Heart right ventricle (tissue), 16 donors: ENCODE measurements at regions of chr10 and their contacts with region 1.

Region 1: DNA sequence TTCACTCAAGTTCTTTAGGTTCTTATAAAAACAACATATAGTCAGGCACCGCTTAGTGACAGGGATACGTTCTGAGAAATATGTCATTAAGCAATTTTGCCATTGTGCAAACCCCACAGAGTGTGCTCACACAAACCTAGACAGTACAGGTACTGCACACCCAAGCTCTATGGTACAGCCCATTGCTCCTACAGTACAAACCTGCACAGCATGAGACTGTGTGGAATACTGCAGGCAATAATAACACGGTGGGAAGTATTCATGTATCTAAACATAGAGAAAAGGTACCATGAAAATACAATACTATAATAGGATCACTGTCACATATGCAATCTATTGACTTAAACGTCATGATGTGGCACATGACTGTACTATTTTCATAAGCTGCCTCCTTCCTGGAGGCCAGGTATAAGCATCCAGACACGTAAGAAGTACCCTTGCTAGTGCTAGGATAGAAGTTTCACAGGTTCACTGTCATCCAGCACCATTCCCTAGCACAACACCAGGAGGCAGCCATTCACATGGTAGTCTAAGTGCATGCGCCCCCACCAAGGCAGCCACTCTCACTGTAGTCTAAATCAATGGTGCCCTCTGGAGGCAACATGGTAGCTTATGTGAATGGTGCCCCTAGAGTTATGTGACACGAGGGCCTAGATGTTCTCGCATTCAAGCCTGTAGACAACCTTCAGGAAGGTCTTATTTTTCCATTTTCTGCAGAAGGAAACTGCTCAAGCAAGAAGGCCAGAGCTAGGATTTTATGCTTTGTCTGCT is 98.5 kb downstream of the ARHGAP22 start:
- DNase-seq: no peak
- ATAC-seq: peak in 1 of 8 donors; percentile 27
- H3K4me3 ChIP-seq: no peak overlapping the region
- H3K27ac ChIP-seq: no peak overlapping the region
- H3K4me1 ChIP-seq: peaks cover 7 to 39% (median 19%) of the 10 kb centered on the region in 9 donors
- H3K27me3 ChIP-seq: no peaks in the 10 kb centered on the region
- CTCF ChIP-seq: peak in 5 of 9 donors; percentile 20 to 37 (median 33)

Region 2: DNA sequence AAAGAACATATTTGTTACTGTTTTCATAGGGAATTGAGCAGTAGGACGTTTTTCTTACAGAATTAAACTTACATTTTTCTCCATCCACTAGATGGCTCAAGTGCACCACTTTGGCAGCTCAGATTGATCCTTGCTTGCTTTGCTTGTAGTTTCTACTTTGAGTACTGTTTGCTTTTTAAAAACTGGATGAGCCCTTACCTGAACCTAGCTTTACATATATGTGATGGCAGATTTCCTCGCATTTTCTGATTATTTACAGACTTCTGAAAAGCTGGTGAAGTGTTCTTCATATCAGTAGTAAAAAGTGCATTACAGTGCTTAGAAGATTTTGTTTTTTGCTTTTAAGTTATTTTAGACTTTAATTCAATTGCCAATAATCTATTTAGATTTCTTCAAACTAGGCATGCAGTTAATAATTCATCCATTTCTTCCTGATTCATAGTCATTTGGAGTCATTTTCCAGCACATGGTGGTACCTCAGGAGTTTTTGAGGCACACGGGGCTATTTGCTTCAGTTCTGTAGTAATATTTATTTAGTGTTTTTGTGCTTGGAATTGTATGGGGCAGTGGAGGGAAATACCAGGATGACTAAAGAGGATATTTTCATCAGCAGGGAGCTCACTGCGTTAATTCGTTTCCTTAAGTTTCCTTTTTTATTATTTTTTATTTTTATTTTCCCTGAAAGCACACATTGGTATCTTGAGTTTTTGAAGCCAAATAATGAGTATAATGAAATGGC is 142.5 kb before region 1 on chr10:
- intact Hi-C with region 1: loop called in 7 of 10 experiments (anchors 2 to 10 kb)
- DNase-seq: peak in 1 of 2 donors; percentile 52
- ATAC-seq: peak in 7 of 8 donors; percentile 51 to 88 (median 73)
- H3K4me3 ChIP-seq: no peak overlapping the region
- H3K27ac ChIP-seq: peak overlapping the region in 6 of 10 donors; percentile 3 to 71 (median 42)
- H3K4me1 ChIP-seq: peaks cover 0 to 60% (median 43%) of the 10 kb centered on the region in 9 donors
- H3K27me3 ChIP-seq: no peaks in the 10 kb centered on the region
- CTCF ChIP-seq: peak; percentile 50 to 85 (median 74)

Region 3: DNA sequence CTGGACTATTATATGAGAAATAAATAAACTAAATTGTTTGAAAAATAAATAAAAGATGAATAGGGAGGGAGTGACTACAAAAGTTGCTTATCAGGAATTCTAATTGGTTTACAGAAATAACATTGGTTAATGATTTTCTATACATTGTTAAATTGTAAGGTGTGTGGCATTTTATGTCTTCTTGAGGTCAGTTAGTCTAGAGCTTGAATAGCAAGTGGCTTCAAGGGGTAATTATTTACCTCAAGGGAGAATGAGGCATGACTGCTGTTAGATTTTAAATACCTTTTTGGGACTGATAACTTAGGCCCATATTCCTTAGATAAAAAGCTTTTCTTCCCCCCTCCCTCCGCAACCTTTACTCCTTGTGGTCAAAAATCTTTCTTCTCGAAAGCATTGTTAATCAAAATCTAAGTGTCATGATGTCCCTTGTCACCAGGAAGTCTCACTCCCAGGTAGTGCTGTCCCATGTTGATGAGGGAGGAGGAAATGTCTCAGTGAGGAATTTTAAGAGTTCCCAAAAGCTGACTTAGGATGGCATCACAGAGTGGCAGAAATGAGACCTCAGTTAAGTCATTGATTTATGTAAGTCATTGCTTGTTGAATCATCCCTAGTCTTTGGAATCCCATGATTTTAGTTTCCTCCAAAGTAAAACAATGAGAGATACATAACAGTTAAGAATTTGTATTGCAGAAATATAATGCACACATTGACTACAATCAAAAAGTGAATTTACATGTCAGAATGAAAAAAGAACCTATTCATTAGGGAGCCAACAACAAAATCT is 128.4 kb before region 1 on chr10:
- intact Hi-C with region 1: loop called in 1 of 10 experiments (anchors 10 kb)
- DNase-seq: no peak
- ATAC-seq: no peak
- H3K4me3 ChIP-seq: no peak overlapping the region
- H3K27ac ChIP-seq: no peak overlapping the region
- H3K4me1 ChIP-seq: peaks cover 0 to 13% (median 0%) of the 10 kb centered on the region in 9 donors
- H3K27me3 ChIP-seq: no peaks in the 10 kb centered on the region
- CTCF ChIP-seq: no peak

Region 4: GRCh38 chr10:48444266-48444665 is 62.1 kb before region 1 on chr10:
- intact Hi-C with region 1: loop called in 2 of 10 experiments (anchors 10 kb)
- DNase-seq: no peak
- ATAC-seq: peak in 1 of 8 donors; percentile 34
- H3K4me3 ChIP-seq: no peak overlapping the region
- H3K27ac ChIP-seq: no peak overlapping the region
- H3K4me1 ChIP-seq: no peaks in the 10 kb centered on the region
- H3K27me3 ChIP-seq: no peaks in the 10 kb centered on the region
- CTCF ChIP-seq: peak in 7 of 9 donors; percentile 14 to 37 (median 33)